ENCODE measurements at regions of chr20 and their contacts with region 1.

Region 1: GRCh38 chr20:63580796-63581461 is 6.9 kb upstream of the HELZ2 start:
- DNase-seq: peak; percentile 79
- H3K4me3 ChIP-seq: no peak overlapping the region
- H3K27ac ChIP-seq: no peak overlapping the region
- H3K4me1 ChIP-seq: no peaks in the 10 kb centered on the region
- H3K27me3 ChIP-seq: no peaks in the 10 kb centered on the region
- CTCF ChIP-seq: peak; percentile 81 to 83

Region 2: DNA sequence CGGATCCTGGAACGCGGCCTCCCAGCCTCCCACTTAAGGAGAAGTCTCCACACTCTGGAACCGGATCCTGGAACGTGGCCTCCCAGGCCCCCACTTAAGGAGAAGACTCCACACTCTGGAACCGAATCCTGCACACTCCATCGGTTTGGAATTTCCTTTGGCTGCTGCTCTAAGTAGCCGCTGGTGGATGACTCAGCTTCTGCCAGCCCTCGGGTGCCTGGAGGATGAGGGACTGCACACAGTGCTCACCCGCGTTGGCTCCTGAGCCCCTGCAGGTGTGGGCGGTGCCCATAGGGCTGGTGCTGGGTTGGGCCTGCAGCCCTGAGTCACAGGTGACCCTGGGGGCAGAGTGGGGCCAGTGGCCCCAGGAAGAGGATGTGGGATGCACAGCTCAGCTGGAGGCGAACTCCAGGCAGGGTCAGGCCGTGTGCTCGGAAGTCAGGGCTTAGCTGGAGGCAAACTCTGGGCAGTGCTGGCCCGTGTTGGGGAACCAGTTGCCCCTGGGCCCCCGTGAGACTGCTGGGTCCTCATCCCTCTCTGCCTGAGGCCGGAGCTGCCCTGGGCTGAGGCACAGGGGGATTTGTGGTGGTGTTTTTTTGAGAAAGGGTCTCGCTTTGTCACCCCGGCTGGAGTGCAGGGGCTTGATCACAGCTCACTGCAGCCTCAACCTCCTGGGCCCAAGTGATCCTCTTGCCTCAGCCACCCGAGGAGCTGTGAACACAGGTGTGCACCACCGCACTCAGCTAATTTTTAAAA is 101.6 kb after region 1 on chr20:
- CTCF ChIA-PET with region 1: no interaction called
- dilution Hi-C with region 1: no loop called
- in situ Hi-C with region 1: no loop called
- intact Hi-C with region 1: loop called (anchors 2 kb)
- DNase-seq: peak; percentile 99
- H3K4me3 ChIP-seq: no peak overlapping the region
- H3K27ac ChIP-seq: peak overlapping the region; percentile 36
- H3K4me1 ChIP-seq: peaks cover 31% of the 10 kb centered on the region
- H3K27me3 ChIP-seq: no peaks in the 10 kb centered on the region
- CTCF ChIP-seq: no peak

Region 3: DNA sequence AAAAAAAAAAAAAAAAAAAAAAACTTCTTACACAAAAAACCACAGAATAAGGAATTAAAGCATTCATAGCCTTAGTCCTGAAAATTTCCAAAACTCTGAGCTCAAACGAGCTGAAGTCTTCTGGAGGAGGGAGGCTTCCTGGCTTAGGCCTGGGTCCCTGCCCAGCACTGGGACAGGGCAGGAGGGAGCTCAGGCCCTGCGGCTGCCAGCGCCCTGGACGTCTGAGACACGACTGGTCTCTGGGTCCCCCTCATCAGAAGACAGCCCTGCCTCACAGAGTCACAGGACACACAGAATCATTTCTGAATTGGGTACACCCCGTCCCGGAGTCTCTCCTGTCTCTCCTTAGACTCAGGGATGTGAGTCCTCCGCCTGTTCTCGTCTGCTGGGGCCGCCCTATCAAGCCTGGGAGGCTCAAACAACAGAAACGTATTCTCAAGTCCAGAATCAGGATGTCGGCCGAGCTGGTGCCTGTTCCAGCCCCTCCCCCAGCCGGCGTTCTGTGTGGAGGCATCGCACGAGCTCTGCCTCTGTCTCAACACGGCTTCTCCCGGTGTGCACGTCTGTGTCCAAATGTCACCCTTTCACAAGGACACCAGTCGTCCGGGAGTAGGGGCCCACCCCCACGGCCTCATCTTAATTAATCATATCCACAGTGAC is 210.7 kb after region 1 on chr20:
- CTCF ChIA-PET with region 1: no interaction called
- dilution Hi-C with region 1: no loop called
- in situ Hi-C with region 1: no loop called
- intact Hi-C with region 1: loop called (anchors 5 kb)
- DNase-seq: no peak
- H3K4me3 ChIP-seq: no peak overlapping the region
- H3K27ac ChIP-seq: no peak overlapping the region
- H3K4me1 ChIP-seq: no peaks in the 10 kb centered on the region
- H3K27me3 ChIP-seq: no peaks in the 10 kb centered on the region
- CTCF ChIP-seq: no peak

Region 4: DNA sequence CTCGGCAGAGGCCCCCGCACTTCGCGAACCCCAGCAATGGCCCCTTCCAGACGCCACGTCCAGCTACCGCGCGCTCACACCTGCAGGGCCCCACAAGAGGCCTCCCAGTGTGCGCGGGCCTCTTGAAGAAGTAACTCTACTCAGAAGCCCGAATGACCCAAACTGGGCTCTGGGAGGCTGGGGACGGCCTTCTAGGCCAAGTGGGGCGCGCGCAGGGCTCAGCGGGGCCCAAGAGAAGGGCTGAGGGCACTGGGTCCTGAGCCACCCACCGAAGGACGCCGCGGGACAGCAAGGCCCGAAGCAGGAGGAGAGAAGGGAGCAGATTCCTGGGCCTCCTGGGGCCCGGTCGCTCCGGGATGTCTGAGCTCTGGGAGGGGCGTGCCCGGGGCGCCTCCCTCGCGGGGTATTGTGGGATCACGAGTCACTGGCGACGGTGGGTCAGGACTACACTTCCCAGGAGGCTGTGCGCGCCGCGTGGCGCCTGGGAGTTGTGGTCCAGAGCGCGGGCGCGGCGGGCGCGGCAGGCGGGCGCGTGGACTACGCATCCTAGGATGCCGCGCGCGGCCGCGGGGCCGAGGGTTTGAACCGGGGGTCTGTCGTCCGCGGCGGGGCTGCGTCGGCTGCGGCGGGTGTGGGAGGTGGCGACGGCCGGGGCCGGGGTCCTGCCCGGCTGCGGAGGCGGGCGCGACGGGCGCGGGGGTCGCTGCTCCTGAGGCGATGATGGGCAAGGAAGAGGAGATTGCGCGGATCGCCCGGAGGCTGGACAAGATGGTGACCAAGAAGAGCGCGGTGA is 481.9 kb after region 1 on chr20 and contains the start of gene TCEA2:
- CTCF ChIA-PET with region 1: no interaction called
- dilution Hi-C with region 1: no loop called
- in situ Hi-C with region 1: no loop called
- intact Hi-C with region 1: loop called (anchors 5 kb)
- DNase-seq: peak; percentile 93
- H3K4me3 ChIP-seq: peak within 1 kb of the TSS; percentile 81 to 92 (median 91)
- H3K27ac ChIP-seq: peak within 1 kb of the TSS; percentile 48
- H3K4me1 ChIP-seq: peaks cover 54% of the 10 kb centered on the region
- H3K27me3 ChIP-seq: no peaks in the 10 kb centered on the region
- CTCF ChIP-seq: no peak
- total RNA-seq, gene TCEA2: 15.7 to 37.9 TPM

Measured in mammary epithelial cell (primary cell).